ENCODE measurements at regions of chr5 and their contacts with region 1.

Region 1: DNA sequence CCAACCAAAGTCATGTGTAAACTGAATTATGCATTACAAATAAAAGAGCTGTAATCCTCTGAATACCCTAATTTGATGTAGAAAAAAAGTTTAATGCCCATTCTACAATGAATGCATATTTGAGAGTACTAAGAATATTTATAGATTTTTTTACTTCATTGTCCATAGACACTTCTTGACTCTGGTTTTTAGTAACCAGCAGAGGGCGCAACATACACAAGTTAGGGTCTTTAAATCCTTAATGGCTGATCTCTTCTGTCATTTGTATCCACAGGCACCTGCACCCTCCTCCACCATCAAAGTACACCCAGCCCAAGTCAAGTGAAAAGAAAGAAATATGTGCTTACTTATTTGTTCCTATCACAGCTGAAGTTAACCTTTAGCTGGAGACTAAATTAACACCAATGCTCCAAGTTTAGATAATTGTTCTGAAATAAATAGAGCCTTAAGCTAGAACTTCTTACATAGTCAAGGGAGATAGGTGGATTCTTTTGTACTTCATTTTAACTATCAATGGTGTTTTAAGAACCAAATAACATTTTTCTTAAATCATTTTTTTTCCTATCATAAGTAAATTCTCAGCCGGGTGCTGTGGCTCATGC is 524.2 kb upstream of the DAB2 start:
- DNase-seq: peak; percentile 89
- ATAC-seq: peak; percentile 81
- H3K4me3 ChIP-seq: no peak overlapping the region
- H3K27ac ChIP-seq: no peak overlapping the region
- H3K4me1 ChIP-seq: no peaks in the 10 kb centered on the region
- H3K27me3 ChIP-seq: no peaks in the 10 kb centered on the region
- CTCF ChIP-seq: peak; percentile 93

Region 2: GRCh38 chr5:39678548-39678947 is 270.4 kb before region 1 on chr5:
- CTCF ChIA-PET with region 1: no interaction called
- POLR2A ChIA-PET with region 1: no interaction called
- intact Hi-C with region 1: no loop called
- DNase-seq: peak; percentile 74
- ATAC-seq: peak; percentile 75
- H3K4me3 ChIP-seq: 0 out of 2 replicates have a peak overlapping the region, but pooled peaks have one; percentile 18
- H3K27ac ChIP-seq: peak overlapping the region; percentile 47
- H3K4me1 ChIP-seq: peaks cover 25% of the 10 kb centered on the region
- H3K27me3 ChIP-seq: no peaks in the 10 kb centered on the region
- CTCF ChIP-seq: no peak

Region 3: GRCh38 chr5:40089269-40089668 is 140.3 kb after region 1 on chr5:
- CTCF ChIA-PET with region 1: no interaction called
- POLR2A ChIA-PET with region 1: no interaction called
- intact Hi-C with region 1: no loop called
- DNase-seq: peak; percentile 37
- ATAC-seq: no peak
- H3K4me3 ChIP-seq: no peak overlapping the region
- H3K27ac ChIP-seq: no peak overlapping the region
- H3K4me1 ChIP-seq: no peaks in the 10 kb centered on the region
- H3K27me3 ChIP-seq: no peaks in the 10 kb centered on the region
- CTCF ChIP-seq: no peak

Region 4: GRCh38 chr5:40160435-40161110 is 211.6 kb after region 1 on chr5:
- CTCF ChIA-PET with region 1: interaction called, 3 read pairs
- POLR2A ChIA-PET with region 1: no interaction called
- intact Hi-C with region 1: loop called (anchors 5 kb)
- DNase-seq: peak; percentile 71
- ATAC-seq: peak; percentile 100
- H3K4me3 ChIP-seq: no peak overlapping the region
- H3K27ac ChIP-seq: no peak overlapping the region
- H3K4me1 ChIP-seq: 0 out of 2 replicates have a peak, but pooled peaks cover 4% of the 10 kb centered on the region
- H3K27me3 ChIP-seq: no peaks in the 10 kb centered on the region
- CTCF ChIP-seq: no peak